ENCODE measurements at regions of chr19 and their contacts with region 1.

Region 1: DNA sequence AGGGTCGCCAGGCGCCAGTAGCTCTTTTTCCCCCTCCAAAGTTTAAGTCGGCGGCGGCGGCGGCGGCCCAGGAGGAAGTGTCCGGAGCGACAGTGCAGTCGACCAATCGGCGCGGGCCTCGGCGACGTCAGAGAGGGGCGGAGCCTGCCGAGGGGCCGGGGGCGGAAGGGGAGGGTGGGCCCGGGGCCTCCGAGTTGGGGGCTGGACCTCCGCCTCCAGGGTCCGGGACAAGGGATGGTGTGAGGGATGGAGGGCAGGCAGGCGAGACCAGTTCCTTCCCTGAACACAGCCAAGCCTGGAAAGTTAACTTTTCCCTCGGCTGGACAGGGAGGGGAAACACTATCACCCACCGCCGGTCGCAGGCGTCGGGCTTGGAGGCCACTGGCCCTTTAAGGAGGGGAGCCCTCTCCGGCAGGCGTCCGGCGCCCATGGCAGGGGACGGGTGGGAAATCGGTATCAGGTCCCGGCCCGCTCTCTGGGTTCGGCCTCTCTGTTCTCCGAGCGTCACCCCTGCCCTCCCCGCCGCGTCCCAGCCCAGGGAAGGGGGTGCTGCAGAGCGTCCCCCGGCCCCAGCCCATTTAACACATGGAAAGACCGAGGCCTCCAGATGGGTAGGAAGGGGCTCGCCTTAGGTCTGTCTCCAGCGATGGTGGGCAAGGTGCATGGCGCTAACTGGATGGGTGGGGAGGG is at the start of gene PRKD2:
- DNase-seq: peak; percentile 66 to 87
- H3K4me3 ChIP-seq: peak within 1 kb of the TSS; percentile 76
- H3K27ac ChIP-seq: 0 out of 2 replicates have a peak within 1 kb of the TSS, but pooled peaks have one; percentile 69
- H3K4me1 ChIP-seq: peaks cover 27% of the 10 kb centered on the region
- H3K27me3 ChIP-seq: no peaks in the 10 kb centered on the region
- CTCF ChIP-seq: no peak
- total RNA-seq, gene PRKD2: 88.5 and 97.8 TPM in 2 replicates

Region 2: DNA sequence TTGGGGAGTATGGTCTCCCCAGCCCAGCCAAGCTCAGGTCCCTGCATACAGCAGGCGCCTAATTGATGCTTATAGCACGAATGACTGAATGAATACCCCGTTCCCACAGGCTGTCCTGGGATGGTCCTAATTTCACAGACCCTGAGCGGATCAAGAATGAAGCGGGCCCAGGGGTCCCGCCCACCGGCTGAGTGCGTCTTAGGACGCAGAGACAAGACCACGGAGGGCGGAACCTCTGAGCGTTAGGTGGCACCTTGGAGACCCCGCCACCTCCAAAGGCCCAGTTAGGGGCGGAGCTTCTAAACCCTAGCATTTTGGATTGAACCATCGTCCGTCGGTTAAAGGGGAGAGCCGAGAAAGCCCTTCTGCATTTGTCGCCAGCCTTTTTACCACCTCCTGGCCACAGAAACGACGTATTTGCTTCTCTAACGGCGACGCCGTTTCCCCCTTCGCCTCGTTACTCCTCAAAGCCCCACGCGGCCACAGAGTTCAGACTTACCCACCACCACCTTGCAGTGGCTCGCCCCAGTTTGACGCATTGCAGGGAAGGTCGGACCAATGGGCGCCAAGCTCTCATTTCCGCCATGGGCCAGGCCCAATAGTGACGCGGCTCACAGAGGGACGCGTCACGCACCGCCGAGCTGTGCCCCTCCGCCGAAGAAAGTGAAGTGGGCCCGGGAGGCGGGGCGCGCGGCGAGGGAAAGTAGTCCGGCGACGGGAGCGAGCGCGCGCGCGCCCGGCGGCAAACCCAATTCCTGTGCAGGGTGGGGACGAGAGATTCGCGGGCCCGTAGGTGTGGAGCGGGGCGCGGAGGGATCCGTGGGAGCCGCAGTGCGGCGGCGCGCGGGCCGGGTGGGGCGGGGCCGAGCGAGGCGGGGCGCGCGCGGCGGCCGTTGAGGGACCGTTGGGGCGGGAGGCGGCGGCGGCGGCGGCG is 116.5 kb before region 1 on chr19:
- CTCF ChIA-PET with region 1: no interaction called
- POLR2A ChIA-PET with region 1: no interaction called
- intact Hi-C with region 1: no loop called
- DNase-seq: peak; percentile 91 to 96
- H3K4me3 ChIP-seq: peak overlapping the region; percentile 100
- H3K27ac ChIP-seq: peak overlapping the region; percentile 93
- H3K4me1 ChIP-seq: peaks cover 12% of the 10 kb centered on the region; the same call in 1 of the 2 replicates
- H3K27me3 ChIP-seq: no peaks in the 10 kb centered on the region
- CTCF ChIP-seq: no peak

Region 3: DNA sequence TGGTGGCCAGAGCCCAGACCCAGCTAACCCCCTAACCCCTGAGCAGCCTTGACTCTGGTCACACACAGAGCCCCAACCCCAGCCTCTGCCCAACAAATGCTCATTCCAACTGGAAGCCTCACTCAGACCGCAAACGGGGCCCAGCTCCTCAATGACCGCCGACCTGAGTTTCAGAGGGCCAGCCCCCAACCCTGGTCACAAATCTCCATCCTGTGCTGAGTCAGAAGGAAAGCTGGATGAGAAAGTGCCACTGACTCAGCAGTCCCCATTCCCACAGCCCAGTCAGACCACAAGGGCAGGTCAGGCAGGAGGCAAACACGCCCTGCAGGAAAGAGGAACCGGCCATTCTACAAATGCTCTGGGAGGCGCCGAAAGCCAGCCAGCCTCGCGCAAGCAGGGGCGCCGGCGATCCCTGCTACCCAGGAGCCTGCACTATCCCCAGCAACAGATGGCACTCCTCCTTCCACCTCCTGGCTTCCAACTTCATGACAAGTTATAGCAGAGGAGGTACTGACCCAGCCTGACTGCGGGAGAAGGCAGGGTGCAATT is 13.8 kb after region 1 on chr19:
- CTCF ChIA-PET with region 1: no interaction called
- POLR2A ChIA-PET with region 1: interaction called, 5 read pairs
- intact Hi-C with region 1: loop called (anchors 1 kb)
- DNase-seq: peak; percentile 92 to 96
- H3K4me3 ChIP-seq: peak overlapping the region; percentile 2; the same call in 1 of the 2 replicates
- H3K27ac ChIP-seq: peak overlapping the region; percentile 83
- H3K4me1 ChIP-seq: peaks cover 54% of the 10 kb centered on the region
- H3K27me3 ChIP-seq: no peaks in the 10 kb centered on the region
- CTCF ChIP-seq: no peak

Region 4: DNA sequence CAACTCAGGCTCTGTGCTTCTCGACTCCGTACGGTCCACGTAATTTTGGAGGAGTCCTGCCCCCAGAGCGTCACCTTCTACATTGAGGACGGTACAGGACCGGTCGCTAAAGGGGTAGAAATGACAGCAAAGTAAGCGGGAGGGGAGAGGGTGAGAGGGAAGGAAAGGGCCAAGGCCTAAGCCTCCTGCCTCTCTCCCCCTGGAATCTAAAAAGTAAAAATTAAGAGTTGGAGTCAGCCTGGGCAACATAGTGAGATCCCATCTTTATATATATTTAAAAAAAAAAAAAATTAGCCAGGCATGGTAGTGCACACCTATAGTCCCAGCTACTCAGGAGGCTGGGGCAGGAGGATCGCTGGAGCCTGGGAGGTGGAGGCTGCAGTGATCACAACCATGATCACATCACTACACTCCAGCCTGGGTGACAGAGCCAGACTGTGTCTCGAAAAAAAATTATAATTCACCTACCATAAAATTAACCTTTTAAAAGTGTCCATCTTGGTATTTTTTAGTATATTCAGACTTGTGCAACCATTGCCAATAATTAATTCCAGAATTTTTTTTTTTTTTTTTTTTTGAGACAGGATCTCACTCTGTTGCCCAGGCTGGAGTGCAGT is 58.6 kb after region 1 on chr19:
- CTCF ChIA-PET with region 1: interaction called, 11 read pairs
- POLR2A ChIA-PET with region 1: no interaction called
- intact Hi-C with region 1: no loop called
- DNase-seq: no peak
- H3K4me3 ChIP-seq: no peak overlapping the region
- H3K27ac ChIP-seq: no peak overlapping the region
- H3K4me1 ChIP-seq: peaks cover 19% of the 10 kb centered on the region
- H3K27me3 ChIP-seq: no peaks in the 10 kb centered on the region
- CTCF ChIP-seq: no peak